Activated T-helper 2 cell treated with anti-CD3 and anti-CD28 coated beads, Interferon-gamma antibody, Interleukin-2, Interleukin-4, amounts not matched to agents 10 μg/mL and 5 μg/mL and 100 μg/mL, durations not matched to agents 14 hours and 24 hours and 36 hours (primary cell): ENCODE measurements at regions of chr5 and their contacts with region 1.

Region 1: GRCh38 chr5:143824851-143825720 is 13.1 kb downstream of the HMHB1 start:
- DNase-seq: peak; percentile 71
- H3K4me3 Mint-ChIP-seq: no peak overlapping the region
- H3K27ac Mint-ChIP-seq: no peak overlapping the region
- H3K4me1 Mint-ChIP-seq: peaks cover 11% of the 10 kb centered on the region
- H3K27me3 Mint-ChIP-seq: no peaks in the 10 kb centered on the region

Region 2: GRCh38 chr5:143002459-143003328 is 822.4 kb before region 1 on chr5:
- intact Hi-C with region 1: loop called (anchors 1 kb)
- DNase-seq: peak; percentile 65
- H3K4me3 Mint-ChIP-seq: peak overlapping the region; percentile 54
- H3K27ac Mint-ChIP-seq: peak overlapping the region; percentile 91
- H3K4me1 Mint-ChIP-seq: peaks cover 73% of the 10 kb centered on the region
- H3K27me3 Mint-ChIP-seq: no peaks in the 10 kb centered on the region

Region 3: DNA sequence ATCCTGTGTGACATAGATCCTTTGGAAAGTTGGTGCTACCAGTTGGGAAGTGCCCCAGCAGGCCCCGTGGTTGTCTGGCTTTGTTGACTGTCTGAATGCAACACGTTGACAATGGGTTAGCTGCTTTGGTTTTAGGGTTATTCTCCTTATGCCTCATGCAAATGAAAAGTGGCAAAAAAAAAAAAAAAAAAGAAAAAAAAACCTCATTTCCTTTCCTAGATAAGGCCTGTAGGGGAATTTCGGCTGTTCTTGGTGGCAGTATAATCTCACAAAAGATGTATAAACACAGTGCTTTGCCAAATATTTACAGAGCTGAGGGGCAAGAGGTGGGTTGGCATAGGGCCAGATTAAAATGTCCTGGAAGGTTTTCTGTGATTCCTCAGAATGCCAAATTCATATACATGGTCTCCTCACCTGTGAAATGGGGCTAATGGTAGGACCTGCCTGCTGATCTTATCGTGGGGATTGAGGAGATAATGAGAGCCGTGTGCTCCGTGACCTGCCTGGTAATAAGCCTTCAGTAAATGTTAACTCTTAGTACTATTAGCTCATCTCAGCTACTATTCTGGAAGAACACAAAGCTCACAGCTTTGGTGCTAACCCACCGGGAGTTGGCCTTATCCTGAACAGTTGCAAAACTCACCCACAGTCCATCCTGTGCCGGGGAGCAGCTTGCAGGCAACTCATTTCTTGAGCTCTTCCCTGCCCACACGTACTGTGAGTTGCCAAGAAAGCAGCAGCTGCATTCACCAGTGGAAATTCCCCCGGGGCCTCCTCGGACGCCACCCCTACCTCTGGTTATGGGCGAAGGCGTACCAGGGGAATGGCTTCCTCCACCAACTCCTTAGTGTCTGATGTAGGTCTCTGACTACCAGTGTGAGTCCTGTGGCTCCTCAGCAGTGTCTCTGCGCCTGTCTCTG is 641.9 kb before region 1 on chr5:
- intact Hi-C with region 1: loop called (anchors 1 kb)
- DNase-seq: peak; percentile 33
- H3K4me3 Mint-ChIP-seq: peak overlapping the region; percentile 43
- H3K27ac Mint-ChIP-seq: peak overlapping the region; percentile 82
- H3K4me1 Mint-ChIP-seq: peaks cover 61% of the 10 kb centered on the region
- H3K27me3 Mint-ChIP-seq: no peaks in the 10 kb centered on the region

Region 4: GRCh38 chr5:143403593-143404415 is 421.3 kb before region 1 on chr5 and contains the start of gene NR3C1:
- intact Hi-C with region 1: loop called (anchors 1 kb)
- DNase-seq: peak; percentile 81
- H3K4me3 Mint-ChIP-seq: peak within 1 kb of the TSS; percentile 88
- H3K27ac Mint-ChIP-seq: peak within 1 kb of the TSS; percentile 97
- H3K4me1 Mint-ChIP-seq: peaks cover 45% of the 10 kb centered on the region
- H3K27me3 Mint-ChIP-seq: no peaks in the 10 kb centered on the region
- total RNA-seq, gene NR3C1: 51.3 and 52.0 TPM in 2 replicates

Region 5: GRCh38 chr5:143605403-143606005 is 219.6 kb before region 1 on chr5:
- intact Hi-C with region 1: loop called (anchors 1 kb)
- DNase-seq: peak; percentile 44
- H3K4me3 Mint-ChIP-seq: peak overlapping the region; percentile 68
- H3K27ac Mint-ChIP-seq: peak overlapping the region; percentile 92
- H3K4me1 Mint-ChIP-seq: peaks cover 44% of the 10 kb centered on the region
- H3K27me3 Mint-ChIP-seq: no peaks in the 10 kb centered on the region

Region 6: DNA sequence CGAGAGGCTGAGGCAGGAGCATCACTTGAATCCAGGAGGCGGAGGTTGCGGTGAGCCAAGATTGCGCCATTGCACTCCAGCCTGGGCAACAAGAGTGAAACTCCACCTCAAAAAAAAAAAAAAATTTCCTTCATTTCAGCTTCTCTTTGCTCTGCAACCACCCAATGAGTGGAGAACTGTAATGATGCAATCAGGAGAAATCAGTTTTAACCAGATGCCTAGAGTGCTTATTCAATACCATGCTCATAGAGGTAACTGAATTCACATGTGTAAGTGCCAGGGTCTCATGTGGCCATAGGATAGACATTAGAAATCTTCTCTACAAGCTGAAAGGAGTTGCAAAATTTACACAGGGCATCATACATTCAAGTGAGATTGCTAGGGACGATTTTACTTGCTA is 57.4 kb after region 1 on chr5:
- intact Hi-C with region 1: no loop called
- DNase-seq: no peak
- H3K4me3 Mint-ChIP-seq: no peak overlapping the region
- H3K27ac Mint-ChIP-seq: no peak overlapping the region
- H3K4me1 Mint-ChIP-seq: no peaks in the 10 kb centered on the region
- H3K27me3 Mint-ChIP-seq: peaks cover 4% of the 10 kb centered on the region

Region 7: DNA sequence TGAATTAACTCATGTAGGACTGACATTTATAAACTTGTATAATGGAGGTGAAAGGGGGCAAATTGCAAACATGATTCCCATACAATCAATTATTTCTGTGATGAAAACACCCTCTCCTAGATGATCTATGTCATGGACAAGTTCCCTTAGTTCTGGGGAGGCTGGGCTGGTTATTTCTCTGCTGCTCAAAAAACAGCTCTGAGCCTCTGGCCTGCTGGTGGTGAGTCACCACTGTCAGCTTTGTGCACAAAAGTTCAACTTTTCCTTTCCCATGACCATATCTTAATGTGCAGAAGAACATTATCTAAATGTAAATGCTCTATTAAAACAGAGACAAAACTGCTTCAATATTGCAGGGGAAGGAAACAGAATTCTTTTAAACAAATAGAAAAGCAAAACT is 71.9 kb after region 1 on chr5:
- intact Hi-C with region 1: loop called (anchors 1 kb)
- DNase-seq: no peak
- H3K4me3 Mint-ChIP-seq: no peak overlapping the region
- H3K27ac Mint-ChIP-seq: peak overlapping the region; percentile 66
- H3K4me1 Mint-ChIP-seq: peaks cover 28% of the 10 kb centered on the region
- H3K27me3 Mint-ChIP-seq: peaks cover 1% of the 10 kb centered on the region

Region 8: GRCh38 chr5:144203750-144204596 is 378.9 kb after region 1 on chr5:
- intact Hi-C with region 1: no loop called
- DNase-seq: no peak
- H3K4me3 Mint-ChIP-seq: no peak overlapping the region
- H3K27ac Mint-ChIP-seq: no peak overlapping the region
- H3K4me1 Mint-ChIP-seq: peaks cover 5% of the 10 kb centered on the region
- H3K27me3 Mint-ChIP-seq: peaks cover 55% of the 10 kb centered on the region